ENCODE measurements at regions of chr6 and their contacts with region 1.

Region 1: DNA sequence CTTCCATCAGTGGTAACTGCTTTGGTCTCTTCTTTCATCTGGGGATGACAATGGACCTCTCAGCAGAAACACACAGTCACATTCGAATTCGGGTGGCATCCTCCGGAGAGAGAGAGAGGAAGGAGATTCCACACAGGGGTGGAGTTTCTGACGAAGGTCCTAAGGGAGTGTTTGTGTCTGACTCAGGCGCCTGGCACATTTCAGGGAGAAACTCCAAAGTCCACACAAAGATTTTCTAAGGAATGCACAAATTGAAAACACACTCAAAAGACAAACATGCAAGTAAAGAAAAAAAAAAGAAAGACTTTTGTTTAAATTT is 6.1 kb downstream of the EDN1 start:
- DNase-seq: peak; percentile 79 to 87
- H3K4me3 ChIP-seq: no peak overlapping the region
- H3K4me3 Mint-ChIP-seq: peak overlapping the region; percentile 61
- H3K27ac Mint-ChIP-seq: peak overlapping the region; percentile 91
- H3K4me1 ChIP-seq: peaks cover 63% of the 10 kb centered on the region
- H3K4me1 Mint-ChIP-seq: peaks cover 49% of the 10 kb centered on the region
- H3K27me3 ChIP-seq: no peaks in the 10 kb centered on the region
- H3K27me3 Mint-ChIP-seq: no peaks in the 10 kb centered on the region
- CTCF ChIP-seq: no peak

Region 2: DNA sequence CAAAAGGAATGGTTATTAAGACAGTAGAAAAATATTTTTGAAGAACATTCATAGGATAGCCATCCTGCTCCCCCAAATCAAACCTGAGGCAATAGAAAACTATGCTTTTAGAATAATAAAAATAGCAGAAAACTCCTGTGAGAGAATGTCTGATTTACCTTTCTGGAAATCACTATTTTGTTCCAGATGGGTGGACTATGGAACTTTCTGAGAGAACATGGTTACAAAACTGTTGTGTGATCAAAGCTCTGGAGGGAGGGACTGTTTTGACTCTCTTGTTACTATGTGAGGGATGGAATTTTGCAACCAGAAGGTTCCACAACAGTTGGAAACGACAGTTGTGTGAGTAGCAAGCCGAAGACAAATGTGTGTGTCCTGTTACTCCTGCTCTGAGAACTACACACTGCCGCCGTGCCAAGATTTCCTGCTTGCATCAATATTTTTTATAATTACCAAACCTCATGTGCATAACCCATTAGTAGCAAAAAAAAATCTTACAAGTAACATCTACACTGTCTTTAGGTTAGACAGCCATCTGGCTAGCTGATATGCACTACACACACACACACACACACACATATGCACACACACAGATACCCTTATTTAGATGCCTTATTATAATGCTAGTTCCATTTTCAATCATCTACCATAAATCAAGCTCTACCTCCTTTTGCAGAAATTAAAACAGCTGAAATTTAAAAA is 295.1 kb before region 1 on chr6:
- CTCF ChIA-PET with region 1: no interaction called
- POLR2A ChIA-PET with region 1: no interaction called
- intact Hi-C with region 1: no loop called
- DNase-seq: no peak
- H3K4me3 ChIP-seq: no peak overlapping the region
- H3K4me3 Mint-ChIP-seq: no peak overlapping the region
- H3K27ac Mint-ChIP-seq: no peak overlapping the region
- H3K4me1 ChIP-seq: peaks cover 6% of the 10 kb centered on the region; the same call in 1 of the 2 replicates
- H3K4me1 Mint-ChIP-seq: peaks cover 17% of the 10 kb centered on the region
- H3K27me3 ChIP-seq: no peaks in the 10 kb centered on the region
- H3K27me3 Mint-ChIP-seq: no peaks in the 10 kb centered on the region
- CTCF ChIP-seq: no peak

Region 3: GRCh38 chr6:12313992-12314805 is 18.0 kb after region 1 on chr6:
- CTCF ChIA-PET with region 1: no interaction called
- POLR2A ChIA-PET with region 1: no interaction called
- intact Hi-C with region 1: no loop called
- DNase-seq: no peak
- H3K4me3 ChIP-seq: no peak overlapping the region
- H3K4me3 Mint-ChIP-seq: no peak overlapping the region
- H3K27ac Mint-ChIP-seq: no peak overlapping the region
- H3K4me1 ChIP-seq: no peaks in the 10 kb centered on the region
- H3K4me1 Mint-ChIP-seq: no peaks in the 10 kb centered on the region
- H3K27me3 ChIP-seq: no peaks in the 10 kb centered on the region
- H3K27me3 Mint-ChIP-seq: no peaks in the 10 kb centered on the region
- CTCF ChIP-seq: no peak

Region 4: DNA sequence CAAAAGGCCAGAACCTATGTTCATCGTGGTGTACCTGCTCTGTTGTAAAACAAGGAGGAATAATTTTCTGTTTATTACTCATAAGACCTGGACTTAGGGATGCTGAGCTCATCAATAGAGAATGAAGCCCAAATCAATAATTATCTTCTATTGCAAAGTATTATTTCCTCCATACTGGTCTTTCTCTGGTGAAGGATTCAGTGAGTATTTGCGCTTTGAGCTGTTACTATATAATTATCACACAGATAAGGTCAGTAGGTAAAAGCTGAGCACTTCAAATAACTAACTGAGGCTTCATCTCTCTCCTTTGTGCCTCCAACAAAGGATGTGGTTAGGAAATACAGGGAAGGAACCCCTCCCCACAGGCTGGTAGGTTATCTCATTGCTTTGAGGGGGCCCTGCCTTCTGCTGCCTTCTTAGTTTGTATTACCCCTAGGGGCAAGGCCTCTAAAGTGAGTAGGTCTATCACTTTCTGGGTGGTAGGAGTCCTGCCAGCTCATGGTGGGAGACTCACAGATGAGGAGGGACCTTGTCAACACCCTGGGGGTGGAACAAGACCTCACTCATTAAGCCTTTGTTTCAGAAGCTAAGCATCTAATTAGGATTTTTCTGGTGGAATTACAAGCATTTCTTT is 28.4 kb after region 1 on chr6:
- CTCF ChIA-PET with region 1: interaction called, 4 read pairs
- POLR2A ChIA-PET with region 1: interaction called, 6 read pairs
- intact Hi-C with region 1: loop called (anchors 1 kb)
- DNase-seq: peak in 1 of 2 experiments; percentile 29
- H3K4me3 ChIP-seq: no peak overlapping the region
- H3K4me3 Mint-ChIP-seq: no peak overlapping the region
- H3K27ac Mint-ChIP-seq: peak overlapping the region; percentile 95
- H3K4me1 ChIP-seq: peaks cover 34% of the 10 kb centered on the region
- H3K4me1 Mint-ChIP-seq: peaks cover 36% of the 10 kb centered on the region
- H3K27me3 ChIP-seq: no peaks in the 10 kb centered on the region
- H3K27me3 Mint-ChIP-seq: no peaks in the 10 kb centered on the region
- CTCF ChIP-seq: no peak

Measured in Caco-2 (cell line).